Stomach (tissue), 19 donors: ENCODE measurements at regions of chr11 and their contacts with region 1.

Region 1: GRCh38 chr11:9015677-9016076 is 11.9 kb upstream of the NRIP3 start:
- DNase-seq: peak; percentile 75 to 89
- H3K4me3 ChIP-seq: no peak overlapping the region
- H3K27ac ChIP-seq: no peak overlapping the region
- H3K4me1 ChIP-seq: peaks cover 0 to 19% (median 13%) of the 10 kb centered on the region in 4 donors
- H3K27me3 ChIP-seq: no peaks in the 10 kb centered on the region
- CTCF ChIP-seq: peak in 5 of 7 experiments; percentile 63 to 78 (median 71)
- EP300 ChIP-seq: no peak
- POLR2A ChIP-seq: no peak

Region 2: GRCh38 chr11:9137293-9138132 is 121.8 kb after region 1 on chr11:
- intact Hi-C with region 1: loop called (anchors 5 kb)
- DNase-seq: peak; percentile 84 to 93
- H3K4me3 ChIP-seq: no peak overlapping the region
- H3K27ac ChIP-seq: peak overlapping the region; percentile 57 to 81 (median 78)
- H3K4me1 ChIP-seq: peaks cover 27 to 44% (median 37%) of the 10 kb centered on the region in 4 donors
- H3K27me3 ChIP-seq: no peaks in the 10 kb centered on the region
- CTCF ChIP-seq: peak in 5 of 7 experiments; percentile 85 to 97 (median 94)
- EP300 ChIP-seq: no peak
- POLR2A ChIP-seq: no peak

Region 3: GRCh38 chr11:9180784-9181183 is 165.1 kb after region 1 on chr11:
- intact Hi-C with region 1: no loop called
- DNase-seq: peak in 1 of 2 donors; percentile 18
- H3K4me3 ChIP-seq: no peak overlapping the region
- H3K27ac ChIP-seq: no peak overlapping the region
- H3K4me1 ChIP-seq: peaks cover 0 to 12% (median 0%) of the 10 kb centered on the region in 4 donors
- H3K27me3 ChIP-seq: no peaks in the 10 kb centered on the region
- CTCF ChIP-seq: no peak
- EP300 ChIP-seq: no peak
- POLR2A ChIP-seq: no peak